PC-3 (cell line): ENCODE measurements at regions of chr14 and their contacts with region 1.

Region 1: DNA sequence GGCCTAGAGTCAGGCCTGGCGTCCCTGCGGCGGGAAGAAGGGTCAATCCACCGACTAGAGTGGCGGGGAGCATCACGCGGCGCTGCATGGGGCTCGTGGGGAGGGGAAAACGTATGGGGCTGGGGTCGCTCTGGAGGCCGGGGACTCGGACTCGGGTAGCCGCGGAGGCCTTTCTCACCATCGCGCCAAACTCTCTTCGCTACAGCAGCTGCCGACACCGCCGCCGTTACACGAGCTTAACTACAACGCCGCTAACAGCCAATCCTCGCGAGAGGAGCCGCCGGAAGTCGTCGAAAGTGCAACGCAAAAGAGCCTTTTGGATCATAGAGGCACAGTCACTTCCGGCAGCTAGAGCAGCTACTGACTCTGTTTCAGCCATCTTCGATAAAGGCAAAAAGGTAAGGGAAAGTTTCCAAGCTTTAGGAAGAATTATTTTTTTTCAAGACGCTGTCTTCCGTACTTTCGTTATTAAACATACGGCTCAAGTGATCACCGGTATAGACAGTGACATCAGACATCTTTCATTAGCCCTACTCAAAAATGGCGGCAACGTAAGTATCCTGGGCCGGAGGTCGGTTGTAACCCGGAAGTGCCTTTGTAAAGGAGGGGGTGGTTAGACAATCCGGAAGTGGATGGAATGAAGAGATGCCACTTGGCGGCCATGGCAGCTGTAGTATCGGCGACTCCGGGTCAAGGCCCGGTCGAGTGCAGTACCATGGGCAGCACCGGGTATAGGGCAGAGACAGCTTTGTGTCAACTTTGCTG is at the starts of genes ERH and SLC39A9:
- DNase-seq: peak; percentile 98
- ATAC-seq: peak; percentile 86
- H3K4me3 ChIP-seq: peak within 1 kb of the TSS; percentile 91
- H3K27ac ChIP-seq: peak within 1 kb of the TSS; percentile 84
- H3K4me1 ChIP-seq: peaks cover 34% of the 10 kb centered on the region
- H3K27me3 ChIP-seq: no peaks in the 10 kb centered on the region
- CTCF ChIP-seq: no peak
- total RNA-seq, gene ERH: 128 and 132 TPM in 2 replicates
- total RNA-seq, gene SLC39A9: 74.9 and 80.8 TPM in 2 replicates

Region 2: DNA sequence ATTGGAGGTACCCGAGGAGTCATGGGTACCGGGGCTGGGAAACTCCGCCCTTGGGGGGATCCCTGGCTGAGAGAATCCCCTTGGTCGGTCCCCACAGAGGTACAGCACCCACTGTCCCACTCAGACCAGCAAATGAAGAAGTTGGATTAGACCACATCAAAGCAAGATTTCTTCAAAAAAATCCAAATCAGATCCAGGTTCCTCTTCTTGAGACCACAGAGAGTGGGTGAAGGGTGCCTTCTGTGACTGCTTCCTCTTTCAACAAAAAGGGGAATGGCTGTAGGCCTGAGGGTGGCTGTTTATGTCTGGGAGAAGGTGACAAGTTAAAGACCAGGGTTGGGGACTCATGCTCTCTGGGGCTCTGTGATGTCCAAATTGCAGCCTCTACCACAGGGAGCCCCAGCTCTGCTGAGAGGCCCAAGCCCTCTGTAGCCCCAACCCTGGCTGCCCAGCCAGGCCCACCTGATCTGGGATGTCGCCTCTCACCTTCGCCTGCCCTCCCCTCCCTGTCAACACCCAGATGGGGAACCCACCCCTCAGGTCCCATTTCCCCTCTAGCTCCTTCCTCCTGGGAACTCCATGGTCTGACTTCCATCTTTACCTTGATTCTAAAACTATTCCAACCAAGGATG is 656.3 kb before region 1 on chr14:
- CTCF ChIA-PET with region 1: no interaction called
- POLR2A ChIA-PET with region 1: no interaction called
- intact Hi-C with region 1: no loop called
- DNase-seq: no peak
- ATAC-seq: no peak
- H3K4me3 ChIP-seq: no peak overlapping the region
- H3K27ac ChIP-seq: no peak overlapping the region
- H3K4me1 ChIP-seq: no peaks in the 10 kb centered on the region
- H3K27me3 ChIP-seq: no peaks in the 10 kb centered on the region
- CTCF ChIP-seq: no peak

Region 3: GRCh38 chr14:68979021-68979782 is 419.0 kb before region 1 on chr14 and contains the start of gene ACTN1:
- CTCF ChIA-PET with region 1: no interaction called
- POLR2A ChIA-PET with region 1: interaction called, 4 read pairs
- intact Hi-C with region 1: loop called (anchors 1 kb)
- DNase-seq: peak; percentile 98
- ATAC-seq: peak; percentile 68
- H3K4me3 ChIP-seq: peak within 1 kb of the TSS; percentile 98
- H3K27ac ChIP-seq: peak within 1 kb of the TSS; percentile 96
- H3K4me1 ChIP-seq: peaks cover 40% of the 10 kb centered on the region
- H3K27me3 ChIP-seq: no peaks in the 10 kb centered on the region
- CTCF ChIP-seq: no peak
- total RNA-seq, gene ACTN1: 303 and 400 TPM in 2 replicates

Region 4: DNA sequence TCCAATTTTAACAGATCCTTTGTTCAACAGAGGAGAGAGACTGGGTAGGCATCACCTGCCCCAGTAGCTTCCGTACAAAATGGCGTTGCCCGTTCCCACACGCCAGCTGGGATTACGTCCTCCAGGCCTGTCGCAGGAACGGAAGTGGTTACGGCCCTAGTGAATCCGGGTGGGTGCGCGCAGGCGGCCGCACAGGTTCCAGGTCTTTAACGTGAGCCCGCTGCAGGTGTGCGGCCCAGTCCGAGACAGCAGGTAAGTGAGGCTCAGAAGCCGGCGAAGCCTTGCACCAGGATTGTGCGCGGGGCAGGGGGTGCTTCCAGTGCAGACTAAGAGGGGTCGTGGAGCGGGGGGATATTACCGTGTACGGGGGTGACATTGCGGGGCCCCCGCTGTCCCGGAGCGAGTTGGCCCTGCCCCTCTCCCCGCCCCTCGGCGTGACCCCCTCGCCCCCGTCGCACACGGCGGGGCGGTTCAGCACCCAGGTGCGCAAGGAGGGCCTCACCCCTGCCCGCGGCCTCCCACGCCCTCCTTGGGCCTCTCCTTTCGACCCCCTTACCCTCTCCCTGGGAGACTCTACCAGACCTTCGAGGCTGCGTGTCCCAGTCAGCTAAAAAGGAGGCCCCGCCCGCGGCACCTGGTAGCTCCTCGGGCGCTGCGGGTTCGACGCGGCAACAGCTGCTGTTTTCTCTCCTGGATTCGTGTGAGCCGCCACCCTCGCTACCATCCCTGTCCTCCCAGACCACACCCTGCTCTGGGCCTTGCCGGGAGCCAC is 206.7 kb before region 1 on chr14 and contains the start of gene EXD2:
- CTCF ChIA-PET with region 1: no interaction called
- POLR2A ChIA-PET with region 1: interaction called, 4 read pairs
- intact Hi-C with region 1: loop called (anchors 1 kb)
- DNase-seq: peak; percentile 95
- ATAC-seq: peak; percentile 97
- H3K4me3 ChIP-seq: peak within 1 kb of the TSS; percentile 84
- H3K27ac ChIP-seq: peak within 1 kb of the TSS; percentile 56
- H3K4me1 ChIP-seq: peaks cover 13% of the 10 kb centered on the region
- H3K27me3 ChIP-seq: no peaks in the 10 kb centered on the region
- CTCF ChIP-seq: no peak
- total RNA-seq, gene EXD2: 19.0 and 19.9 TPM in 2 replicates

Region 5: GRCh38 chr14:69373104-69373503 is 25.1 kb before region 1 on chr14:
- CTCF ChIA-PET with region 1: no interaction called
- POLR2A ChIA-PET with region 1: no interaction called
- intact Hi-C with region 1: no loop called
- DNase-seq: no peak
- ATAC-seq: no peak
- H3K4me3 ChIP-seq: no peak overlapping the region
- H3K27ac ChIP-seq: no peak overlapping the region
- H3K4me1 ChIP-seq: no peaks in the 10 kb centered on the region
- H3K27me3 ChIP-seq: no peaks in the 10 kb centered on the region
- CTCF ChIP-seq: no peak

Region 6: DNA sequence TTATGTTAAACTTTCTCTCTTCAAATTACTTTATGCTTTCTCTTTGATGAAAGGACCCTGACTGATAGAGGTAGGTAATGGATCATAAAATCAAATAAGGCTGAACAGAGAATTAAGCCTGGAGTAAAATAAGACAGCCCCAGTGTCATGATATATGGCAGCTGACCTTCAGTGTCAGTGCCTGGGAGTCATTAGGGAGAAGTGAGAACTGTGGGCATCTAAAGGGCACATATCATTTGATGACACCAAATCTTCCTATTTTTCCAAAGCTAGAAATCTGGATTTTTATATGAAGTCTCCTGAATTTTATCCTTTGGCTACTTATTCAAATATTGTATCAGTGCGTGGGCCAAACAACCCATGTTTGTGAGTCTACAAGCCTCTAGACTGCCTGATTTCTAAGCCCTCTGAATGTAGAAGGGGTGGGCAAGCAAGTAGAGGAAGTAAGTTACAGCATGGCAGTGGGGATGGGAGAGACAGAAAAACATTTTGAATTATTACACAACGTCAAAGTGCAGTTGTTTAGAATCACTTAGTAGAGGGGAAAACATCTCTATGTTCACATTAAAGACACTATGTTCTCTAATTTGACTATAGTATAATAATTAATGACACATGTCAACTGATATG is 10.2 kb after region 1 on chr14:
- CTCF ChIA-PET with region 1: no interaction called
- POLR2A ChIA-PET with region 1: interaction called, 10 read pairs
- intact Hi-C with region 1: no loop called
- DNase-seq: no peak
- ATAC-seq: no peak
- H3K4me3 ChIP-seq: no peak overlapping the region
- H3K27ac ChIP-seq: no peak overlapping the region
- H3K4me1 ChIP-seq: no peaks in the 10 kb centered on the region
- H3K27me3 ChIP-seq: no peaks in the 10 kb centered on the region
- CTCF ChIP-seq: no peak

Region 7: DNA sequence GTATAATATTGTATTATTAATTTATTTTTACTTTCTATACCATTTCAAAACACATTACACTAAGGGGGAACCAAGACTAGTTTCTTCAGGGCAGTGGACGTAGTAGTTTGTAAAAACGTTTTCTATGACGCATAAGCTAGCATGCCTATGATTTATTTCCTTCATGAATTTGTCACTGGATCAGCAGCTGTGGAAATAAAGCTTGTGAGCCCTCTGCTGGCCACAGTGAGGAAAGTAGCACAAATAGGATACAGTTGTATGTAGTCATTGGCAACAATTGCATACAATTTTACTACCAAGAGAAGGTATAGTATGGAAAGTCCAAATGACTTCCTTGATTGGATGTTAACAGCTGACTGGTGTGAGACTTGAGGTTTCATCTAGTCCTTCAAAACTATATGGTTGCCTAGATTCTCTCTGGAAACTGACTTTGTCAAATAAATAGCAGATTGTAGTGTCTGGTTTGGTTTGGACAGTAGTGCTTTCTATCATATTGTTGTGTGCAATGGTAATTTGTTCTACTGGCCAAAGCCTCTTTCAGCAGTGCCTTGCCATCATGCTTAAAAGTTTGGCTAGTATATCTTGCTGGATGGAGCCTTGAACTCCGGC is 62.0 kb after region 1 on chr14:
- CTCF ChIA-PET with region 1: interaction called, 3 read pairs
- POLR2A ChIA-PET with region 1: interaction called, 11 read pairs
- intact Hi-C with region 1: loop called (anchors 1 kb)
- DNase-seq: peak; percentile 91
- ATAC-seq: peak; percentile 46
- H3K4me3 ChIP-seq: no peak overlapping the region
- H3K27ac ChIP-seq: no peak overlapping the region
- H3K4me1 ChIP-seq: peaks cover 11% of the 10 kb centered on the region
- H3K27me3 ChIP-seq: no peaks in the 10 kb centered on the region
- CTCF ChIP-seq: peak; percentile 94